Activated CD4-positive, alpha-beta memory T cell treated with anti-CD3 and anti-CD28 coated beads for 36 hours (primary cell): ENCODE measurements at regions of chr1 and their contacts with region 1.

Region 1: DNA sequence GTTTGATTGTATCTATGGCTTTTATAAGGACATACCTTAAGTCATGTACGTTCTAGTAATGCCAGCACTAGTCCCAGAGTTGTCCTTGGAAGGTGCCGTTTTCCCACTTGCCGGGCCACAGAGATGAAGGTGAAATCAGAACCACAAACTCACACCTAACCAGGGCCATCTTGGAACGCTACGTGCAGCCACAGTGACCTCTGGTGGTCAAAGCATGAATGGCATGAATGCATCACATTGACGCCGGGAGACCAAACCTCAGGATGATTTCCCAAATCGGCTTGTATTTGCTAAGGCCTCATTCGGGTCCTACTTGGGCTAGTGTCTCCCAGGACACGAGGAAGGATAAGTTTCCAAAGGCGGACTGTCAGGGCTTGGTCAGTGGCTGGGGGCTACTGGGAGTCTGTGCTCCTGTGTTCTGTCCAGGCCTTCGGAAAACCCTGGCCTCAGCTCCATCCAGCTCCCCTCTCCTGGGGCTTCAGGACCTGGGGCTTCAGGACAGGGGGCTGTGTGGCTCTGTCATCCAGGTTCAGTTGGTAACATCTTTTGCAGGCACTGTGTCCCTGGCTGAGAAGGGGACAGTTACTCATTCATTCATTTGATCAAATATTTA is 260.5 kb downstream of the PRDM2 start:
- DNase-seq: peak; percentile 73
- H3K4me3 Mint-ChIP-seq: no peak overlapping the region
- H3K27ac Mint-ChIP-seq: no peak overlapping the region
- H3K4me1 Mint-ChIP-seq: no peaks in the 10 kb centered on the region
- H3K27me3 Mint-ChIP-seq: peaks cover 22% of the 10 kb centered on the region

Region 2: GRCh38 chr1:13667691-13668090 is 292.8 kb before region 1 on chr1:
- CTCF ChIA-PET with region 1: interaction called, 11 read pairs
- POLR2A ChIA-PET with region 1: no interaction called
- intact Hi-C with region 1: loop called (anchors 1 kb)
- DNase-seq: no peak
- H3K4me3 Mint-ChIP-seq: no peak overlapping the region
- H3K27ac Mint-ChIP-seq: no peak overlapping the region
- H3K4me1 Mint-ChIP-seq: peaks cover 4% of the 10 kb centered on the region
- H3K27me3 Mint-ChIP-seq: no peaks in the 10 kb centered on the region